Esophagus muscularis mucosa (tissue), 4 donors: ENCODE measurements at regions of chr15 and their contacts with region 1.

Region 1: GRCh38 chr15:64387562-64388168 is at the start of gene TRIP4:
- DNase-seq: peak; percentile 99
- H3K4me3 ChIP-seq: peak within 1 kb of the TSS; percentile 60 to 93 (median 76)
- H3K27ac ChIP-seq: peak within 1 kb of the TSS; percentile 55 to 82 (median 79)
- H3K4me1 ChIP-seq: peaks cover 12 to 14% (median 13%) of the 10 kb centered on the region in 4 donors
- H3K27me3 ChIP-seq: no peaks in the 10 kb centered on the region
- CTCF ChIP-seq: peak in 2 of 3 experiments; percentile 6 to 20
- EP300 ChIP-seq: no peak
- POLR2A ChIP-seq: no peak
- total RNA-seq, gene TRIP4: 9.9 to 13.2 (median 11.8) TPM

Region 2: GRCh38 chr15:64162870-64163658 is 224.6 kb before region 1 on chr15 and contains the start of gene PPIB:
- intact Hi-C with region 1: loop called (anchors 10 kb)
- DNase-seq: peak; percentile 99
- H3K4me3 ChIP-seq: peak within 1 kb of the TSS; percentile 75 to 84 (median 82)
- H3K27ac ChIP-seq: peak within 1 kb of the TSS; percentile 80 to 90 (median 86)
- H3K4me1 ChIP-seq: peaks cover 46 to 53% (median 49%) of the 10 kb centered on the region in 4 donors
- H3K27me3 ChIP-seq: no peaks in the 10 kb centered on the region
- CTCF ChIP-seq: peak in 2 of 3 experiments; percentile 52 to 57
- EP300 ChIP-seq: no peak
- POLR2A ChIP-seq: peak; percentile 80
- total RNA-seq, gene PPIB: 110 to 227 (median 214) TPM

Region 3: DNA sequence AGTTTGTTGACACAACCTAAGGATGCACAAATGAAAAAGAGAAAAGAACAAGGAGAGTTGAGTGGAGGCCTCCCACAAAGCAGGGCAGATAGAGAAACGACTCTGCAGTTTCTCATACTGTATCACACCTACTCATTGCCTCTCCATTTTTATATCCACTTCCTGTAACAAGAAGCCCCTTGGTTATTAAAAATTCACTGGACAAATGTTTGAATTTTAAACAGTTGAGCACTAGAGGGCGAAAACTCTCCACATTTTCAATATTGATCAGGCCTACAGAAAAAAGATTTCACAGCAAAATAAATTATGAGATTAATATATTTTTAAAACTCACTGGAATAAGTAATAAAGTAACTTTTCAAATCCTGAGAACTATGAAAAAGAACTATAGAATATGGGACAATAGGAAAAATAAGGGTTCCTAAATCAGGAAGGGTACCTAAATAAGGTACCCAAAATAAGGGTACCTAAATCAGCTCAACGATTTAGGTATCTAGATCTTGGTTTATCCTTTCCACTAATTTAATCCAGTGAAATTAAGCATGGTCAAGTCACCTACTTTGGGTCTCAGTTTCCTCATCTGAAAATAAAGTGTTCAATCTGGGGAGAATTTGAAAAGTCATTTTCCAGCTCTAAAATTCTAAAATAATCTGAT is 177.9 kb before region 1 on chr15:
- intact Hi-C with region 1: loop called (anchors 10 kb)
- DNase-seq: no peak
- H3K4me3 ChIP-seq: no peak overlapping the region
- H3K27ac ChIP-seq: no peak overlapping the region
- H3K4me1 ChIP-seq: no peaks in the 10 kb centered on the region
- H3K27me3 ChIP-seq: no peaks in the 10 kb centered on the region
- CTCF ChIP-seq: peak; percentile 36 to 39 (median 37)
- EP300 ChIP-seq: no peak
- POLR2A ChIP-seq: no peak

Region 4: DNA sequence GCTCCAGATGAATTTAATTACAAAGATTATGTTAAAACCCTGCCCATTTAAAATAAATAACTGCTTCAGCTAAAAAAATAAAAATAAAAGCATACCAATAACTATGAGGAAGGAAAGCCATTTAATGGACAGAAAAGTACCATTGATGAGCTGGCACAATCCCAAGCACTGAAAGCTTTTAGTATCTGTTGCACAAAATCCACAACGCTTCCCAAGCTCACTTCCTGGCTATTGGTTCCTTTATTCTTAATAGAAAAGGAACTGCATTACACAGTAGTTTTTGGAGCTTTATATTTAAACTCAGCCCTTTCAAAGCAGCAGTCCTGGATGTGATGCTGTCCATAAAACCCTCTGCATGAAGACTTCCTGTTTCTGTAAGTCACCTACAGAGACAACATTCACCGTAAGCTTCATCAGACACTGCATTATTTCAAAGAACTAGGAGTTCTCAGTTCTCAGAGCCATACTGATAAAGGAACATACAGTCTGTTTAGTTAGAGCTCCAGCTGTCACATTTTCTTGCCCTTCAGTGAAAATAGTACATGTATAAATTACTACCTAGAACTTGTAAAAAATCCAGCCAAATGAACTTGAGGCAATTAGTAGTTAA is 113.2 kb before region 1 on chr15:
- intact Hi-C with region 1: no loop called
- DNase-seq: no peak
- H3K4me3 ChIP-seq: no peak overlapping the region
- H3K27ac ChIP-seq: no peak overlapping the region
- H3K4me1 ChIP-seq: peaks cover 4 to 7% (median 6%) of the 10 kb centered on the region in 4 donors
- H3K27me3 ChIP-seq: no peaks in the 10 kb centered on the region
- CTCF ChIP-seq: no peak
- EP300 ChIP-seq: no peak
- POLR2A ChIP-seq: no peak